Cardiac septum (tissue), 1 donor: ENCODE measurements at regions of chr3 and their contacts with region 1.

Region 1: GRCh38 chr3:14371573-14372474 is 30.6 kb upstream of the SLC6A6 start:
- DNase-seq: peak; percentile 95

Region 2: DNA sequence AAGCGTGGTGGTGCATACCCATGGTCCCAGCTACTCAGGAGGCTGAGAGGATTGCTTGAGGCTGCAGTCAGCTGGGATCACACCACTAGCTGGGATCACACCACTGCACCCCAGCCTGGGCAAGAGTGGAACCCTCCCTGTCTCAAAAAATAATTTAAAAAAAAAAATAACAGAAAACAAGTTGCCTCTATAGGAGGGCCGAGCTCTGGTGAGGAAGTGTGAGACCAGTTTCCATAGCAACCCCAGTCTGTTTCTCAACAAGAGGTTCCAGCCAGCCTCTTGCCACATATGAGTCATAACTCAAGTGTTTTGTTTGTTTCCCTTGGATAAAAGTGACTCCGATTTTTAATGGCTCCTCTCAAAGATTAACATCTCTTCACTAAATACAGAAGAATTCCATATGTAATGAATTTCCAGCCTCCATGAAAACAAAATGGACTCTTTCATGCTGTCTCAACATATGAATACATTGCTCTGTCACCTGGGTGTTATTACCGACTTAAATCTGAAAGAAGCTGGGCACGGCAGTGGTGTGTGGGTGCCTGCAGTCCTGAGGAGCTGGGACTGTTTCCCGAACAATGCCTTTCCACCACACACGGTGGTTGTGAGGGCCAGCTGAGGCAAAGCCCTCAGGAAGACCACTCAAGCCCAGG is 227.3 kb before region 1 on chr3:
- intact Hi-C with region 1: no loop called
- DNase-seq: peak; percentile 78

Region 3: DNA sequence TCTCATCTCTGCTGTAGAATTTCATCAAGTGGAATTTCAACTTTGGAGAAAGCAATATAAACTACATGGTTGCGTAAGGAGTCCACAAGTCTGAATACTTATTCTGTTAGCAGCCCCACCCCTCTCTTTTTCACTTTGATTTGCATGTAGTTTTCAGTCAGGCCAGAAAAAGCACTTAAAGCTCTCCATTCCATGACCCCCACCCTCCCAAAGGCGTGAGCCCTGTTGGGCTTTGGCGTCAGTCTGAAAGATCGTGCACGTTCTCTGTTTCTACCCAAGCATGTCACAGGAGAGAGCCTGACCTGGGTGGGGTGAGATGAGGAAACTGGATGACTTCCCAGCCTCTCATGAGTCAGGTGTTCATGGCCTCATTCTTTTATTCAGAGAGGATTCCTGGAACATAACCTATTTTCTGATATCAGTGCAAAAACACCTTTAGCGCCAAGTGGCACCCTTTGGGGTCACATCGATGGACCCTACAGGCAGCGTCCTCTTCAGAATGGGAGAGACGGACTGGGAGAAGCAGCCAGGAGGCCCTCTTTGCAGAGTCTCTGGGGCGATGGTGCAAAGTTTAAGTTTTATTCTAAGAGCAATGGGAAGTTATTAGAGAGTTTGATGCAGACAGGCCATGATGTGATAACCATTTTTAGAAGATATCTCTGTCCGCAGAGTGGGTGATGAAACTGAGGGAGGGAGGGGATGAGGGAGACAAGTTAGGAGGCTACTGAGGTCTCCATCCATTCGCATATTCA is 137.4 kb before region 1 on chr3:
- intact Hi-C with region 1: loop called (anchors 1 kb)
- DNase-seq: peak; percentile 73

Region 4: DNA sequence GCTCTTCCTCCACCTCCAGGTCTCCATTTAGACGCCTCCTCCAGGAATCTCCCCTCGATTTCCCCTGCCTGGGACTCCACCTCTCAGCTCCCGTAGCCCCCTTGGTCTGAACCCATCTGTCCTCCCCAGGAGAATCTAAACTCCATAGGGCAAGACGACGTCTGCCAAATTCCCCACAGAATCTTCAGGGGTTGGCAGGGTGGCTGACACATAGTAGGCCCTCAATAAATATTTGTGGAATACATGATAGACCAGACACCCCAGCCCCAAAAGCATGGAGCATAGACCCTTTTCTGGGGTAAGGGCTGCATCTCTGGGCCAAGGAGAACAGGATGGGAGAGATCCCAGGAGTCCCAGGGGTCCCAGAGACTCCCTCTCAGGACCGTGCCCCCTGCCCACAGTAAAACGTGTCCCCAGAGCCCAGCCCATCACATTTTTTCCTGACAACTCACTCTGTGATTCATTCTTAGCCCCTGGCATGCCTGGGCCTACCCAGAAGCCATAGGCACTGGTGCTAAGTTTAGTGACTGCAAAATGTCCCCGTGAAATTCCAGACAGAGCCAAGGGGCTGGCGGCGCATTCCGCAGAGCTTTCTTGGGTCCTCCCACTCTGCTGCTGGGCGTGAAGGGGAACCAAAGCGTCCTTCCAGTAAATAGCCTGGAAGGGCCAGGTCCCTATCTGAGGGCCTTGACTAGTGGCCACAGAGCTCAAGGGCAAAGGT is 47.4 kb before region 1 on chr3:
- intact Hi-C with region 1: loop called (anchors 2 kb)
- DNase-seq: no peak

Region 5: DNA sequence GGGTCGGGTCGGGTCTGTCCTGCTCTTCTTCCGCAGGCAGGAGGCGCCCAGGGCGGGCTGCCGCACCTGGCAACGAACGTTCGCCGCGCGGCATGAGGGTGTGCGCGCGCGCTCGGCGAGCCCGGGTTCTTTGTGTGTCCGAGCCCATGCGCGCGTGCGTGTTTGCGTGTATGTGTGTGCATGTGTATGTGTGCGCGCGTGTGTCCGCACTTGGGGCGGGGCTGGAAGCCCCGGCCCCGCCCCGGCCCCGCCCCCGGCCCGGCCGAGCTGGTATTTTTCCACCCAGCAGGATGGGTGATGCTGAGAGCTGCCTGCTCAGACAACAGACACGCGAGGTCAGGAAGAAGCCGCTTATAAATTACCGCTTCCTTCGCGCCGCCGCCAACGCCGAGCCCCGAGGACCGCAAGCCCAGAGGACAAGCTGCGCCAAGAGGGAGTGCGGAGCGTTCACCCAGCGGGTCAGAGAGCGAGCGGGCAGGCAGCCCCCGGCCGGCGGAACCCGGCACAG is 30.5 kb after region 1 on chr3 and contains the start of gene SLC6A6:
- intact Hi-C with region 1: loop called (anchors 1 kb)
- DNase-seq: peak; percentile 97
- total RNA-seq, gene SLC6A6: 129 TPM

Region 6: GRCh38 chr3:14577897-14578296 is 206.1 kb after region 1 on chr3:
- intact Hi-C with region 1: no loop called
- DNase-seq: no peak